ENCODE measurements at regions of chr1 and their contacts with region 1.

Region 1: GRCh38 chr1:153796791-153797659 is 21.8 kb downstream of the SLC27A3 start:
- DNase-seq: peak; percentile 83
- H3K27ac ChIP-seq: no peak overlapping the region
- CTCF ChIP-seq: peak; percentile 87

Region 2: DNA sequence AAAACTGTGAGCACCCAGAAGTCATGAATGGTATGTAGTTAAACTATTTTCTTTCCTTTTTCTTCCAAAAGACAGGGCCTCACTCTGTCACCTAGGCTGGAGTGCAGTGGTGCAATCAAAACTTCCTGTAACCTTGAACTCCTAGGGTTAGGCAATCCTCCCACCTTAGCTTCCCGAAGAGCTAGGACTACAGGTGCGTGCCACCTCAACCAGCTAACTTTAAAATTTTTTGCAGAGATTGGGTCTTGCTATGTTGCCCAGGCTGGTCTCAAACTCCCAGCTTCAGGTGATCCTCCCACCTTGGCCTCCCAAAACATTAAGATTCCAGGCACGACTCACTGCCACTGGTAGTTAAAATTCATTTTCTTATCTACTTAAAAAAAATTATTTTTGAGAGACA is 63.3 kb after region 1 on chr1:
- CTCF ChIA-PET with region 1: no interaction called
- POLR2A ChIA-PET with region 1: no interaction called
- DNase-seq: no peak
- H3K27ac ChIP-seq: no peak overlapping the region
- CTCF ChIP-seq: no peak

Region 3: DNA sequence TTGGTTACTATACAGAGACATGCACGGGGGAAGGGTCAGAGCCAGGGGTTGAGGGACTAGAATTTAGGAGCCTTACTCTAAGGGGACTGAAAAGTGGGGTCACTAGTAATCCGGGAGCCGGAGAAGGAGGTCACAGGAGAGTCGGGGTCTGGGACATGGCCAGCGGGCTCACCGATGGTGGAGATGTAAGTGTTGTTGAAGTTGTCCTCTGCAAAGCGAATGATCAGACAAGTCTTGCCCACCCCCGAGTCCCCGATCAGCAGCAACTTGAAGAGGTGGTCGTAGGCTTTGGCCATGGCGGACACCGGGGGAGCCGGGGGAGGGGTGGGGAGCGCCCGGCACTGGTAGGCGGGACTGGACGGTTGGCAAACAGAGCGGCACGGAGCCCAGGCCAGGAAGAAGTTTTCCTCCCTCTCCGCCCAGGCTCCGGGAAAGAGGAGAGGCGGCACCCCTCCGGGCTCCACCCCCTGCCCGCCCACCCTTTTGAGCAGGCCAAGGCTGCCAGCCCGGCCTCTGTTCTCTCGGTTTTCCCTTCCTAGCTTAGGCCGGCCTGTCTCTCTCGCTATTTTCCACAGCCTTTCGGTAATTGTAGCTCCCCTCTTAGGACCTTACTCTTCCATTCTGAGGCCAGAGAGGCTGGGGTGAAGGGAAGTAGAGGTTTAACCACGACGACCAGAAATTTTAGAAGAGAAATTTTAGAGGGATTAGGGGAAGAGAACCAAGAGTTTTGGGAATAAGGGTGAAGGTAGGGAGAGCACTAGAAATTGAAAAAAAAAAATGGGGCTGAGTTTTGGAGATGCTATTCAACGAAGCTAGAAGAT is 189.1 kb after region 1 on chr1 and contains the start of gene RAB13:
- CTCF ChIA-PET with region 1: interaction called, 18 read pairs
- POLR2A ChIA-PET with region 1: no interaction called
- DNase-seq: peak; percentile 93
- H3K27ac ChIP-seq: peak within 1 kb of the TSS; percentile 84
- CTCF ChIP-seq: no peak